ENCODE measurements at regions of chr11 and their contacts with region 1.

Region 1: GRCh38 chr11:59545179-59546020 is 34.1 kb downstream of the OR4D9 start:
- DNase-seq: no peak
- ATAC-seq: no peak
- H3K4me3 ChIP-seq: no peak overlapping the region
- H3K27ac ChIP-seq: no peak overlapping the region
- H3K4me1 ChIP-seq: no peaks in the 10 kb centered on the region
- H3K27me3 ChIP-seq: no peaks in the 10 kb centered on the region
- CTCF ChIP-seq: no peak
- POLR2A ChIP-seq: no peak

Region 2: DNA sequence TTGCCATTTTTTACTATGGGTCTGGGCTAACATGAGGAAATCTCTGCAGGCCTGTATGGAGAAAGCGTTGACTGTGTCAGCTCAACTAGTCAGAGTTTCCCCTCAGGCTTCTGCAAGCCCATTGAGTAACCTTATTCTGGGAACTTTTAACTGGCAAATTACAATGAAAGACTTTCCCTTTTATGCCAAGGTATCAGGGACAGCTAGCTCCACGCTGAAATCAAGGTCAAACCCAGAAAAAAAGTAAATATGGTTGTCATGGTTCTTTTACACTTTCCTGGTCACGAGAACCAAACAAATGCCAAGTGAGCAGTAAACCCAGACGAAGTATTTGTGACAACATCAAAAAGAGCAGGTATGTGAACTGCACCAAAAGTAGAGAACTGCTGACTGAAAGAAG is 56.4 kb after region 1 on chr11:
- intact Hi-C with region 1: loop called (anchors 10 kb)
- DNase-seq: peak; percentile 29 to 61 (median 34)
- ATAC-seq: peak; percentile 91
- H3K4me3 ChIP-seq: no peak overlapping the region
- H3K27ac ChIP-seq: peak overlapping the region; percentile 59 to 85 (median 72)
- H3K4me1 ChIP-seq: peaks cover 39% of the 10 kb centered on the region
- H3K27me3 ChIP-seq: no peaks in the 10 kb centered on the region
- CTCF ChIP-seq: no peak
- POLR2A ChIP-seq: no peak

Region 3: GRCh38 chr11:59678118-59678812 is 132.9 kb after region 1 on chr11:
- intact Hi-C with region 1: loop called (anchors 5 kb)
- DNase-seq: no peak
- ATAC-seq: no peak
- H3K4me3 ChIP-seq: no peak overlapping the region
- H3K27ac ChIP-seq: no peak overlapping the region
- H3K4me1 ChIP-seq: peaks cover 7% of the 10 kb centered on the region
- H3K27me3 ChIP-seq: no peaks in the 10 kb centered on the region
- CTCF ChIP-seq: no peak
- POLR2A ChIP-seq: no peak

Region 4: GRCh38 chr11:59698506-59698905 is 153.1 kb after region 1 on chr11:
- intact Hi-C with region 1: no loop called
- DNase-seq: no peak
- ATAC-seq: no peak
- H3K4me3 ChIP-seq: no peak overlapping the region
- H3K27ac ChIP-seq: no peak overlapping the region
- H3K4me1 ChIP-seq: no peaks in the 10 kb centered on the region
- H3K27me3 ChIP-seq: no peaks in the 10 kb centered on the region
- CTCF ChIP-seq: no peak
- POLR2A ChIP-seq: no peak